Activated CD4-positive, alpha-beta memory T cell treated with anti-CD3 and anti-CD28 coated beads, Interleukin-2, amount 10 ng/mL, durations not matched to agents 7 days and 5 days (primary cell): ENCODE measurements at regions of chr13 and their contacts with region 1.

Region 1: GRCh38 chr13:30465585-30466357 is at the start of gene HMGB1:
- DNase-seq: peak; percentile 99
- H3K4me3 Mint-ChIP-seq: peak within 1 kb of the TSS; percentile 96
- H3K27ac Mint-ChIP-seq: peak within 1 kb of the TSS; percentile 100
- H3K4me1 Mint-ChIP-seq: peaks cover 36% of the 10 kb centered on the region
- H3K27me3 Mint-ChIP-seq: peaks cover 2% of the 10 kb centered on the region
- total RNA-seq, gene HMGB1: 611 to 615 TPM

Region 2: DNA sequence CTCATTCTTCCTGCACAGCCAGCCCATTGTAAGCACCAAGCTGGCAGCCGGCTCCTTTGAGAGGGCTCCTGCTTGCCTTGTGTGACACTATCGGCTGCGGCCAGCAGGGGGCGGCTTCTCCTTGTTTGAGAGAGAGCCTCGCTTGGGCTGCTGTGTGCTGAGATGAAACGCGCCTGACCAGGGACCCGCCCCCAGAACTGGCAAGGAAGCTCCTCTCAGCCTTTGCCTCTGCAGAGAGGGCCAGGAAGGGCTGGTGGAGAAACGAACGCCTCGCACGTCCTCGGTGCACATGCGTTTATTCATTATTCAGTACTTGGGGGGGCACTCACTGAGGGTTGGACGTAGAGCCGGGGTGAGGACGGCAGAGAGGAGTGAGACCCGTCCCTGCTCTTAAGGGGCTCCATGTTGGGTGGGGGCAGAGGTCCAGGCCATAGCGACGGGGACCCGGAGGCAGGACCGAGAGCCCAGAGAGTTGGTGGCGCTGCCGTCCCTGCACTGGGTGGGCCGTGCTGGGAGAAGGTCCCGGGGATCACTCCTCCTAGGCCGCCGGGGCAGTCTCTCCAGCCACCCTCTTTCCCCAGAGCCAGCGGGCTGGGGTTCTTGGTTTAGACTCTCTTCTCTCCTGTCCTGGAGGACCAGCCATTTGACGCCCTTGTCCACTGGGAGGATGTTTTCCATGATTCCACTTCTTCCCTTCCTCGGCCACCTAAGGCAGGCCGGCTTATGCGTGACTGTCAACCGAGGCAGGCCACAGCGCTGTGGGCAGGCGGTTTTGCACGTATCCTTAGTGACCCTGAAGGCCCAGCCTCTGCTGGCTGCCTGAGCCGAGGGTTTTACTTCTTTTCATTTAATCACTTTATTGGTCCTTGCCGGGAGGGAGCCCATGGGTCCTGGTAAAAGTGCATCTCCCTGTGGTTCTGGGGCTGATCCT is 332.9 kb before region 1 on chr13:
- CTCF ChIA-PET with region 1: interaction called, 13 read pairs
- POLR2A ChIA-PET with region 1: interaction called, 12 read pairs
- DNase-seq: peak; percentile 98
- H3K4me3 Mint-ChIP-seq: no peak overlapping the region
- H3K27ac Mint-ChIP-seq: peak overlapping the region; percentile 21
- H3K4me1 Mint-ChIP-seq: peaks cover 11% of the 10 kb centered on the region
- H3K27me3 Mint-ChIP-seq: no peaks in the 10 kb centered on the region

Region 3: DNA sequence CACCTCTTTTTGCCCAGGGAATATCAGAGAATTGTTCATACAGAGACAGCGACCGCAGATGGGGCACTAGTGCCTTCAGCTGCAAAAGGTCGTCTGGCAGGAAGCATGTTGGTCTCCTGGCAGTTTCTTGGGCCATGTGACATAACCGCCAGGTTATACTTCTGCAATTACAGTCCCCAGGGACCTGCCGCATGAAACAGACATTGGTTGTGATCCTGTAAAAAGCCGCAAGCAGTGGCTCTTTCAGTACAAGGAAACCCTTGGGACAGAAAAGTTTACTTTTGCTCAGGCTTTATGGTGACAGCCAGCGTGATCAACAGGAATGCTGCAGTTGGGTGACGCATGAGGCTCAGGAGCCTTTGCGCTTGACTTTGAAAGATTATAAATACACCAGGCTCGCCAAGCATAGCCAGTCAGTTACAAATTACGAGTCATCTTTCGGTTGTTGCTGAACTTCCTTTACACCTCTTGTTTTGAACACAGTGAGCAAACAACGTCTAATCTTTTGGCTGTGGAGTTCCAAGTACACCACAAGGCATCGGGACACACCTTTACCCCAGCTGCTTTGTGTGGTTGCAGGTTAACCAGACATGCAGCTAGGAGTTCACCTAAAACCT is 94.0 kb before region 1 on chr13:
- CTCF ChIA-PET with region 1: interaction called, 7 read pairs
- POLR2A ChIA-PET with region 1: interaction called, 101 read pairs
- DNase-seq: peak; percentile 73
- H3K4me3 Mint-ChIP-seq: peak overlapping the region; percentile 78
- H3K27ac Mint-ChIP-seq: peak overlapping the region; percentile 96
- H3K4me1 Mint-ChIP-seq: peaks cover 79% of the 10 kb centered on the region
- H3K27me3 Mint-ChIP-seq: no peaks in the 10 kb centered on the region

Region 4: DNA sequence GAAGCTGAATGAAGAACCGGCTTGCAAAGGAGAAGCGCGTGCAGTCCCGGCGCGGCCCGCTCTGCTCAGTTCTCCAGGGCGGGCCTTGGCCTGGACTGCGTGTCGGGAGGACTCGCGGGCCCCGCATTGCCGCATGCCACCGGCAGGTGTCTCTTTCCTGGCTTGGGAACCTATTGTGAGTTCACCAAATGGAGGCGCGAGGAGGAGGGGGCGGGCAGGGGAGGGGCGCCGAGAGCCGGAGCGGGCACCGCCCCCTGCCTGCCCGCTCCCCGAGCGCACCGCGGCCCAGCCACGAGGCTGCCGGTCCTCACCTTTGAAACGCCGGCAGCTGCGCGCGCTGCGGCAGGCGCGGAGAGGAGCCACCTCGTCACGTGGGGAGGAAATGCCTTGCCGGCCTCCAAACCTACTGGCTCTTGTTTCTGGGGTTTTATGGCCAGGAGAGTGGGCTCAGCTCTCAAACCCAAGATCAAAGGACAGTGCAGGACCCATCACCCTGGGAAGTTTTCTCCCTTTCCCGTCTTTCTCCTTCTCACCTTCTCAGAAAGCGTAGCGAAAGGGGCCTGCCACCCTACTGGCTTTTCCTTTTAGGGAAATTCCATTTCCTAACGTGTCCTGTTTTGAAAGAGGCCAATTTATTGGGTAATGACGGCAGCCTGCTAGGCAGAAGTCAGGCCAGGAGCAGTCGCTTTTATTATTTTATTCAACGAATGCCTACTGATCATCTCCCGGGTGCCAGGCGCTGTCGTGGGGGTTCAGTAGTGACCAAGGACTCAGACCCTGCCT is 57.3 kb before region 1 on chr13:
- CTCF ChIA-PET with region 1: interaction called, 3 read pairs
- POLR2A ChIA-PET with region 1: interaction called, 21 read pairs
- DNase-seq: peak; percentile 93
- H3K4me3 Mint-ChIP-seq: peak overlapping the region; percentile 44
- H3K27ac Mint-ChIP-seq: peak overlapping the region; percentile 31
- H3K4me1 Mint-ChIP-seq: peaks cover 29% of the 10 kb centered on the region
- H3K27me3 Mint-ChIP-seq: peaks cover 11% of the 10 kb centered on the region

Region 5: GRCh38 chr13:30504081-30504480 is 38.3 kb after region 1 on chr13:
- CTCF ChIA-PET with region 1: no interaction called
- POLR2A ChIA-PET with region 1: interaction called, 15 read pairs
- DNase-seq: no peak
- H3K4me3 Mint-ChIP-seq: no peak overlapping the region
- H3K27ac Mint-ChIP-seq: peak overlapping the region; percentile 62
- H3K4me1 Mint-ChIP-seq: peaks cover 16% of the 10 kb centered on the region
- H3K27me3 Mint-ChIP-seq: no peaks in the 10 kb centered on the region

Region 6: DNA sequence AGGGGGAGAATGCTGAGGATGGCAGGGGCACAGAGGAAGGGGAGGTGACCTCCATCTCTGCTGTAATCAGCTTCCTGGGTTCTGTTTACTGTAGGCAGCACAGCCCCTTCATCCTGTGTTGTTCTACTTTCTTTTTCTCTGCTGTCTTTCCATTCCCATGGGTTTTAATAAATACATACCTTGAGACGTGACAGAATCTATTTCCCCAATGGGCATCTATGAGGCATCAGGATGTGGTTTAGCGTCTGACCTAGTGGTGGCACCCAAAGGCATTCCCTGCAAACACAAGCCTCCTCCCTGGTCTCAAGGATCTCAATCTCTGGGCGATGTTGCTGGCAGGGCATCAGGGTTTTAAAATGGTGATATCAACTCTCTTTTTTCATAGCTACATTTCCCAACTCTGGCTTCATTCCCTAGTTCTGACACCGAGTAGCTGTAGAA is 330.4 kb after region 1 on chr13:
- CTCF ChIA-PET with region 1: interaction called, 3 read pairs
- POLR2A ChIA-PET with region 1: interaction called, 17 read pairs
- DNase-seq: peak; percentile 33
- H3K4me3 Mint-ChIP-seq: peak overlapping the region; percentile 42
- H3K27ac Mint-ChIP-seq: peak overlapping the region; percentile 73
- H3K4me1 Mint-ChIP-seq: peaks cover 36% of the 10 kb centered on the region
- H3K27me3 Mint-ChIP-seq: no peaks in the 10 kb centered on the region